HepG2 (cell line): ENCODE measurements at regions of chr6 and their contacts with region 1.

Region 1: DNA sequence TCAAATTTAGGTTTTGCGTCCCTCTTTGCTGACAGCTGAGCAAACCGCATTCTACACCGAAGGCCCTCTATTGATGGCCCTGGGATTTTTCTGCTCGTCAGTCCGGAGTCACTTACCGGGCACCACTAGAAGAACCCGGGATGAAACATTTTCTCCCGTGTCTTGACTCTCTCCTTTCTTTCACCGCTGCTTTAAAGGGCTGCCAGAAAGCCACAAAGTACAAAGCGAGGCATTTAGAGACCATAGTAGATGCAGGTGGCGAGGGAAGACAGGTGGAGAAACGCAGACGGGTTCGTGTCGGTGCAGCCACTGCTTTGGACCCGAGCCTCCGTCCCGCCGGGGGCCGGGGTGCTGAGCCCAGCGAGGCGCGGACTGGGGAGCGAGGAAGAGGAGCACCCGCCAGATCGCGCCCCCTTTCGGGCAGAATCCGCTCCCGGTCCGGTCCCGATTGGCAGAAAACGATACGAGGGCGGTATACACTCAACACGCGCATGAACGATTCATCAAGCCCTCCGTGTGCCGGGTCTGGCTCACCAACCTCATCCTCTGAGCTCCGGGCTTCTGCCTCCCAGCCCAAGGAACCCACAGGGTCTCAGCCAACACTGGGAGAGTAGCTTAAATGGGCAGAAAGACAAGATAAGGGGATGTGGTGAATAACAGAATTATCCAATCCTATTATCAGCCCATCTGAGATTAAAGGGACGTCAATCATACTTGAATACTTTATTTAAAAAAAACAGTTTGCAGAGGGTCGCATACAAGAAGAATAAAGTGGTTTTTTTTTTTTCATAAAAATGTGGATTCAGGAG is 84.9 kb downstream of the TRIM27 start:
- DNase-seq: peak; percentile 80
- ATAC-seq: peak; percentile 94
- H3K4me3 ChIP-seq: peak overlapping the region; percentile 77 to 94 (median 83)
- H3K27ac ChIP-seq: peak overlapping the region; percentile 16
- H3K4me1 ChIP-seq: peaks cover 11% of the 10 kb centered on the region
- H3K27me3 ChIP-seq: peaks cover 0 to under 1% of the 10 kb centered on the region in 2 experiments; a peak in 2 of 5 replicates
- CTCF ChIP-seq: peak; percentile 95
- EP300 ChIP-seq: no peak
- POLR2A ChIP-seq: no peak
- RAD21 ChIP-seq: no peak; the same call in none of the 2 replicates

Region 2: DNA sequence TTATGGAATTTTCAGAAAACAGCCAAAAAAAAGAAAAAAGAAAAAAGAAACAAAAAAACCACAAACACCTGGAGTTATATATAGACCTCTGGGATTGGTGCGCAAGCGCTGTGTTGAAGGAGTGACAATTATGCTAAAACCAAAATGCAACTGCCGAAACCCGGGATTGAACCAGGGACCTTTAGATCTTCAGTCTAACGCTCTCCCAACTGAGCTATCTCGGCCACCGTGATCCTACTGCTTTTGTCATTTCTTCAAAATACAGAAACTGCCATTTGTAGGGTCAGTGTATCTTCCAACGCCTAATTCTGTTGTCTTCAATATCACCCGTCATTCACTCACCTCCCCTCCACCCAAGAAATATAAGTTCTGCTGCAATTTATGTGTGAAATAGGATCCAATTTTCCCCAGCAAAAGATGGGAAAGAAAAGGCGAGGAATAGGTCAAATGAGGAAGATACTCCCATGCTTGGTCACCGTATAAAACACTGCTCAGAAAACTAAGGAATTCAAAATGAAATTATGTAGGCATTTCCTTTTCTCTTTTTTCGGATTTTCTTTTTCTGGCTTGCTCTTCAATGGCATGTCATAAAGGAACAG is 31.1 kb before region 1 on chr6:
- CTCF ChIA-PET with region 1: no interaction called
- POLR2A ChIA-PET with region 1: no interaction called
- in situ Hi-C with region 1: no loop called
- intact Hi-C with region 1: loop called (anchors 2 kb)
- DNase-seq: peak; percentile 81
- ATAC-seq: peak; percentile 28
- H3K4me3 ChIP-seq: peak overlapping the region; percentile 54 to 78 (median 67)
- H3K27ac ChIP-seq: no peak overlapping the region
- H3K4me1 ChIP-seq: peaks cover 57% of the 10 kb centered on the region
- H3K27me3 ChIP-seq: peaks cover 2 to 18% of the 10 kb centered on the region in 2 experiments; a peak in 2 of 5 replicates
- CTCF ChIP-seq: no peak
- EP300 ChIP-seq: no peak; a peak in 1 of 4 replicates
- POLR2A ChIP-seq: no peak
- RAD21 ChIP-seq: no peak; the same call in 1 of the 2 replicates

Region 3: GRCh38 chr6:28880894-28881780 is 42.3 kb after region 1 on chr6:
- CTCF ChIA-PET with region 1: no interaction called
- POLR2A ChIA-PET with region 1: interaction called, 5 read pairs
- in situ Hi-C with region 1: no loop called
- intact Hi-C with region 1: loop called (anchors 5 kb)
- DNase-seq: peak; percentile 82
- ATAC-seq: peak; percentile 27
- H3K4me3 ChIP-seq: peak overlapping the region; percentile 38 to 63 (median 59)
- H3K27ac ChIP-seq: no peak overlapping the region
- H3K4me1 ChIP-seq: peaks cover 62% of the 10 kb centered on the region
- H3K27me3 ChIP-seq: no peaks in the 10 kb centered on the region
- CTCF ChIP-seq: no peak
- EP300 ChIP-seq: no peak
- POLR2A ChIP-seq: no peak
- RAD21 ChIP-seq: no peak

Region 4: GRCh38 chr6:28940858-28941680 is 102.2 kb after region 1 on chr6:
- CTCF ChIA-PET with region 1: interaction called, 6 read pairs
- POLR2A ChIA-PET with region 1: no interaction called
- in situ Hi-C with region 1: no loop called
- intact Hi-C with region 1: loop called (anchors 2 kb)
- DNase-seq: peak; percentile 89
- ATAC-seq: peak; percentile 73
- H3K4me3 ChIP-seq: peak overlapping the region; percentile 68 to 85 (median 79)
- H3K27ac ChIP-seq: peak overlapping the region; percentile 63
- H3K4me1 ChIP-seq: peaks cover 44% of the 10 kb centered on the region
- H3K27me3 ChIP-seq: peaks cover 0 to 7% of the 10 kb centered on the region in 2 experiments; a peak in 1 of 5 replicates
- CTCF ChIP-seq: peak; percentile 13
- EP300 ChIP-seq: no peak
- POLR2A ChIP-seq: no peak
- RAD21 ChIP-seq: no peak

Region 5: GRCh38 chr6:29016559-29017427 is 178.0 kb after region 1 on chr6:
- CTCF ChIA-PET with region 1: interaction called, 84 read pairs
- POLR2A ChIA-PET with region 1: interaction called, 17 read pairs
- in situ Hi-C with region 1: loop called (anchors 5 kb)
- intact Hi-C with region 1: loop called (anchors 1 kb)
- DNase-seq: peak; percentile 80
- ATAC-seq: peak; percentile 90
- H3K4me3 ChIP-seq: peak overlapping the region; percentile 67 to 82 (median 70)
- H3K27ac ChIP-seq: peak overlapping the region; percentile 15
- H3K4me1 ChIP-seq: peaks cover 22% of the 10 kb centered on the region
- H3K27me3 ChIP-seq: no peaks in the 10 kb centered on the region; a peak in 2 of 5 replicates
- CTCF ChIP-seq: peak; percentile 82
- EP300 ChIP-seq: no peak
- POLR2A ChIP-seq: no peak
- RAD21 ChIP-seq: peak; percentile 81

Region 6: DNA sequence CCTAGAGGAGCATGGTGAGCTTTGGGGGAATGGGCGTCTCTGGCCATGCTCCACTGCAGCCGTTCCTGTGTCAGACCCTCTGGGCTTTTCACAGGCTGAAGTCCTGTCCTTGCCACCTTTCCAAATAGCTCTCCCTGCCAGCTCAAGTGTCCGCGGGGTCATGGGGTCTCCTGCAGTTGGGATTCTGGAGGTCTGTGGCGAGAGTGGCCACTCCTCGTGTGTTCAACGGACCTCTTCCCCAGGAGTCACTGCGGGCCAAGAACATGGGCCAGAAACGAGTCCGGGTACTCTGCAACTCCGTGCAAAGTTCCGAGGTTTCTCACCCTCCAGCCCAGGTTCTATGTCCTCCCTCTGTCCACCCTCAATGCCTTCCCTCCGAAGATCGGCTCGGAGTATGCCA is 243.6 kb after region 1 on chr6:
- CTCF ChIA-PET with region 1: no interaction called
- POLR2A ChIA-PET with region 1: no interaction called
- in situ Hi-C with region 1: no loop called
- intact Hi-C with region 1: no loop called
- DNase-seq: no peak
- ATAC-seq: no peak
- H3K4me3 ChIP-seq: no peak overlapping the region
- H3K27ac ChIP-seq: no peak overlapping the region
- H3K4me1 ChIP-seq: no peaks in the 10 kb centered on the region
- H3K27me3 ChIP-seq: peaks cover 0 to 5% of the 10 kb centered on the region in 2 experiments; a peak in 2 of 5 replicates
- CTCF ChIP-seq: no peak
- EP300 ChIP-seq: no peak
- POLR2A ChIP-seq: no peak
- RAD21 ChIP-seq: no peak

Region 7: GRCh38 chr6:29589423-29590048 is 750.7 kb after region 1 on chr6:
- CTCF ChIA-PET with region 1: interaction called, 4 read pairs
- POLR2A ChIA-PET with region 1: no interaction called
- in situ Hi-C with region 1: loop called (anchors 25 kb)
- intact Hi-C with region 1: no loop called
- DNase-seq: peak; percentile 40
- ATAC-seq: peak; percentile 84
- H3K4me3 ChIP-seq: no peak overlapping the region
- H3K27ac ChIP-seq: no peak overlapping the region
- H3K4me1 ChIP-seq: no peaks in the 10 kb centered on the region
- H3K27me3 ChIP-seq: peaks cover 0 to 7% of the 10 kb centered on the region in 2 experiments; a peak in 2 of 5 replicates
- CTCF ChIP-seq: peak; percentile 97
- EP300 ChIP-seq: no peak
- POLR2A ChIP-seq: no peak
- RAD21 ChIP-seq: peak; percentile 79